Activated CD4-positive, alpha-beta memory T cell treated with anti-CD3 and anti-CD28 coated beads, Interleukin-2, amount 10 ng/mL, durations not matched to agents 7 days and 5 days (primary cell): ENCODE measurements at regions of chr1 and their contacts with region 1.

Region 1: GRCh38 chr1:36516372-36517325 is 33.9 kb upstream of the CSF3R start:
- DNase-seq: peak; percentile 63
- H3K4me3 Mint-ChIP-seq: no peak overlapping the region
- H3K27ac Mint-ChIP-seq: no peak overlapping the region
- H3K4me1 Mint-ChIP-seq: peaks cover 18% of the 10 kb centered on the region
- H3K27me3 Mint-ChIP-seq: peaks cover 3% of the 10 kb centered on the region

Region 2: DNA sequence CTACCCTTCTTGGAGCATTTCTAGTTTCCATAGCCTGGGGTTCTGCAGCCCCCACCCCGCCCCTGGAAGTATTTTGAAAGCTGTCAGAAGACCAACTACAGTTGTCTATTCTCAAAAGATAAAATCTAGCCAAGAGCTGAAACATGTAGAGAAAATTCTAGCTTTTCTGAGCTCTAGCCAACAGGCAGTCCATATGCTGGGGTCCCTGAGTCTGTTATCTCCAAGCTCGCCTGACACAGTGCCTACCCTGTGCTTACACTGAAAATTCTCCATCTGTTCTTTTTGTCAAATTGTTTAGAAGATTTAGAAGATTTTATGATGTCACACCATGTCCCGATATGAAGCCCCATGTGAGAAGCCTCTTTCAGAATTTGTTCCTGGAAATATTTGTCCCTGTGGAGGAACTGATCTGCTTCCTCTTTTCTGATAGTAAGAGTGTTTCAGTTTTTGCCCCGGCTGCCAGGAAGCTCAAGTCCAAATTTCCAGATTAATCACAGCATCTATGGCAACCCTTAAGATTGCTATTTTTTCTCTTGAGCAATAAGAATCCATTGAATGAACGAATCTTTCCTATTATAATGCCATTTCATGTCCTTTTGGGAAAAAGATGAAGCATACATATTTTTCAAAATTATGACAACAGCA is 10.3 kb before region 1 on chr1:
- CTCF ChIA-PET with region 1: interaction called, 17 read pairs
- POLR2A ChIA-PET with region 1: no interaction called
- DNase-seq: no peak
- H3K4me3 Mint-ChIP-seq: no peak overlapping the region
- H3K27ac Mint-ChIP-seq: no peak overlapping the region
- H3K4me1 Mint-ChIP-seq: no peaks in the 10 kb centered on the region
- H3K27me3 Mint-ChIP-seq: peaks cover 37% of the 10 kb centered on the region

Region 3: DNA sequence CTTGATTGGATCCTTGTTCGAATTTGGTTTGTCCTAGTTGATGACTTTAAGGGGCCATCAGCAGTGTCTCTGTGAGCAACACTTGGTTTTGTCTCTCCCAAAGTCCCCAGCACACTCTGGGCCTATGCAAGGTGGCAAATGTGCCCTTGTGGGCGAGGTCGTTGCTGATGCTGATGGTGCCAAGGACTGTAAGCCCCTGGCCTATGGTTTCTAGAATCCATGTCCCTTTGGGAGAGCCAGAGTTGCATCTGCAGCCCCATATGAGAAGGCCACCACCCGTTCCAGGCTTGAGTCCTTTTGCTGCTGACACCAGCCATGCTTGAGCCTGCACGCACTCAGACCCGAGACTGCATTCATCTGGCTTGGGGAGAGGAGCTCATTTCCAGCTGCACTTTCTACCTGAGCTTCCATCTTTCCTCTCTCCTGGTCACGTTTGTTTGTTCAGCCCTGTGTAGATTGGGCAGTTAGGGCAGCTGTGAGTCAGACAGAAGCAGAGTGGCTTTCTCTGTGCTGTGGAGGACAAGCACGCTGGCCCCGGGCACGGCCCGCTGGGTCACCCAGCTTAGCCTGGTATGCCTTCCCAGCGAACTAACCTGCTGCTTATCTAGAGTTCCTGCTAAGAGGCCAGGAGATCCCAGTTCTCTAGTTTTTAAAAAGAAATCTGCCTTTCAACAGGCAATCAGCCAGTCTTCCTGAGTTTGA is 18.2 kb after region 1 on chr1:
- CTCF ChIA-PET with region 1: interaction called, 20 read pairs
- POLR2A ChIA-PET with region 1: no interaction called
- DNase-seq: no peak
- H3K4me3 Mint-ChIP-seq: no peak overlapping the region
- H3K27ac Mint-ChIP-seq: no peak overlapping the region
- H3K4me1 Mint-ChIP-seq: no peaks in the 10 kb centered on the region
- H3K27me3 Mint-ChIP-seq: peaks cover 21% of the 10 kb centered on the region

Region 4: GRCh38 chr1:36553591-36554322 is 37.1 kb after region 1 on chr1:
- CTCF ChIA-PET with region 1: interaction called, 15 read pairs
- POLR2A ChIA-PET with region 1: no interaction called
- DNase-seq: peak; percentile 71
- H3K4me3 Mint-ChIP-seq: no peak overlapping the region
- H3K27ac Mint-ChIP-seq: no peak overlapping the region
- H3K4me1 Mint-ChIP-seq: no peaks in the 10 kb centered on the region
- H3K27me3 Mint-ChIP-seq: peaks cover 48% of the 10 kb centered on the region

Region 5: GRCh38 chr1:36585569-36586548 is 69.2 kb after region 1 on chr1:
- CTCF ChIA-PET with region 1: no interaction called
- POLR2A ChIA-PET with region 1: no interaction called
- DNase-seq: no peak
- H3K4me3 Mint-ChIP-seq: no peak overlapping the region
- H3K27ac Mint-ChIP-seq: no peak overlapping the region
- H3K4me1 Mint-ChIP-seq: peaks cover under 1% of the 10 kb centered on the region
- H3K27me3 Mint-ChIP-seq: peaks cover 20% of the 10 kb centered on the region

Region 6: DNA sequence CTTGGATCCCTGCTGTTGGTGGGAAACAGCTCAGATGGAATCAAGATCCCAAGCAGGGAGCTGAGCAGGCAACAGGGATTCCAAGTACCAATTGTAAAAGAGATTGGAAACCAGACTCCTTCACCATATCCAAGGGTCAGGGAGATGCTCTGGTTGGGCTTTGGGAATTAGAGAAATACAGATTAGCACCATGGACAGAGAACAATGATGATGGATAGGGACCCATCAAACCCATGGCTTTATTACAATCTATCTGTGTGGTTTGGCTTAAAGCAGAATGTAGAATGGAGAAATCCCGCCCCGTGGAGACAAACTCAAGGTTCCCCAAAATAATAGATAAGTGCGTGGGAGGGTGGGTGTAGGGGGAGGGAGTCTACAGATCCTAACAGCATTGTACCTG is 86.8 kb after region 1 on chr1:
- CTCF ChIA-PET with region 1: no interaction called
- POLR2A ChIA-PET with region 1: no interaction called
- DNase-seq: no peak
- H3K4me3 Mint-ChIP-seq: no peak overlapping the region
- H3K27ac Mint-ChIP-seq: no peak overlapping the region
- H3K4me1 Mint-ChIP-seq: peaks cover 16% of the 10 kb centered on the region
- H3K27me3 Mint-ChIP-seq: peaks cover 6% of the 10 kb centered on the region

Region 7: DNA sequence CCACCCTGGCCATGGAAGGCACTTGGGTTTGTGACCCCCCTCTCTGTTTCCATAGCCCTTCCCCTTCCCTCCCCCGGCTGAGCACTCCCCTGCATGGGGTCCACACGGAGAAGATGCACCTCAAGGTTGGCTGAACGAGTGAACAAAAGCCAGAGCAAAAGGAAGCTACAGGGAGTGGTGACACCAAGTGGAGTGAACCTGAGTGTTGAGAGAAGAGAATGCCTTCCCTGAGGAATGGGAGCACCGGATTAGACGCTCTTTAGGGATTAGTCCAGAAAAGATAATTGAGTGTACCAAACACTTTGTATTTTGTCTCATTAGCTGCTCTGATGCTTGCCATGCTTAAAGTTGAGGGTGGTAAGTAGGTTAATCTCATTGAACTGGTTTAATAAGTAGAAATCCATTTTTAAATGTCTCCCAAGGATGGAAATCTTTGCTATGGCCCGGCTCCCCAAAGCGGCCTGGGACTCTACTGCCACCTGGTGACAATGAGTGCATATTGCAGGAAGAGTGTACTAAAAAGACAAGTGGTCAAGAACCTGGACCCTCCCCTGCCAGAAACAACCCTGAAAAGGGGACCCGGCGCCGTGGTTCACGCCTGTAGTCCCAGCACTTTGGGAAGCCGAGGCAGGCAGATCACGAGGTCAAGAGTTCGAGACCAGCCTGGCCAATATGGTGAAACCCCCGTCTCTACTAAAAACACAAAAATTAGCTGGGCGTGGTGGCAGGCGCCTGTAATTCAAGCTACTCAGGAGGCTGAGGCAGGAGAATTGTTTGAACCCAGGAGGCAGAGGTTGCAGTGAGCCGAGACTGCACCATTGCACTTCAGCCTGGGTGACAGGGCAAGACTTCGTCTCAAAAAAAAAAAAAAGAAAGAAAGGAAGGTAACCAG is 807.1 kb after region 1 on chr1:
- CTCF ChIA-PET with region 1: interaction called, 11 read pairs
- POLR2A ChIA-PET with region 1: no interaction called
- DNase-seq: peak; percentile 24
- H3K4me3 Mint-ChIP-seq: no peak overlapping the region
- H3K27ac Mint-ChIP-seq: no peak overlapping the region
- H3K4me1 Mint-ChIP-seq: no peaks in the 10 kb centered on the region
- H3K27me3 Mint-ChIP-seq: peaks cover 9% of the 10 kb centered on the region